CD4-positive, alpha-beta T cell (primary cell): ENCODE measurements at regions of chr3 and their contacts with region 1.

Region 1: GRCh38 chr3:115960799-115961198 is 337.5 kb downstream of the GAP43 start:
- DNase-seq: no peak
- ATAC-seq: no peak
- H3K4me3 ChIP-seq: no peak overlapping the region
- H3K4me3 Mint-ChIP-seq: no peak overlapping the region
- H3K27ac ChIP-seq: no peak overlapping the region
- H3K27ac Mint-ChIP-seq: no peak overlapping the region
- H3K4me1 ChIP-seq: no peaks in the 10 kb centered on the region
- H3K4me1 Mint-ChIP-seq: no peaks in the 10 kb centered on the region
- H3K27me3 ChIP-seq: no peaks in the 10 kb centered on the region
- H3K27me3 Mint-ChIP-seq: peaks cover 5% of the 10 kb centered on the region
- CTCF ChIP-seq: no peak

Region 2: GRCh38 chr3:116640109-116640508 is 679.3 kb after region 1 on chr3:
- CTCF ChIA-PET with region 1: no interaction called
- POLR2A ChIA-PET with region 1: no interaction called
- intact Hi-C with region 1: loop called in 1 of 2 experiments (anchors 10 kb)
- DNase-seq: no peak
- ATAC-seq: no peak
- H3K4me3 ChIP-seq: no peak overlapping the region
- H3K4me3 Mint-ChIP-seq: no peak overlapping the region
- H3K27ac ChIP-seq: no peak overlapping the region
- H3K27ac Mint-ChIP-seq: no peak overlapping the region
- H3K4me1 ChIP-seq: no peaks in the 10 kb centered on the region
- H3K4me1 Mint-ChIP-seq: no peaks in the 10 kb centered on the region
- H3K27me3 ChIP-seq: no peaks in the 10 kb centered on the region
- H3K27me3 Mint-ChIP-seq: no peaks in the 10 kb centered on the region
- CTCF ChIP-seq: no peak